ENCODE measurements at regions of chr1 and their contacts with region 1.

Region 1: GRCh38 chr1:27136998-27137542 is 17.9 kb downstream of the SLC9A1 start:
- DNase-seq: peak; percentile 57 to 85 (median 83)
- ATAC-seq: peak; percentile 90
- H3K4me3 ChIP-seq: peak overlapping the region; percentile 64
- H3K4me3 Mint-ChIP-seq: peak overlapping the region; percentile 76 to 97 (median 89)
- H3K27ac ChIP-seq: peak overlapping the region; percentile 87
- H3K27ac Mint-ChIP-seq: peak overlapping the region; percentile 98 to 100 (median 99)
- H3K4me1 ChIP-seq: peaks cover 25 to 34% of the 10 kb centered on the region in 2 donors
- H3K4me1 Mint-ChIP-seq: peaks cover 44 to 64% (median 58%) of the 10 kb centered on the region in 7 donors
- H3K27me3 ChIP-seq: no peaks in the 10 kb centered on the region
- H3K27me3 Mint-ChIP-seq: no peaks in the 10 kb centered on the region

Region 2: DNA sequence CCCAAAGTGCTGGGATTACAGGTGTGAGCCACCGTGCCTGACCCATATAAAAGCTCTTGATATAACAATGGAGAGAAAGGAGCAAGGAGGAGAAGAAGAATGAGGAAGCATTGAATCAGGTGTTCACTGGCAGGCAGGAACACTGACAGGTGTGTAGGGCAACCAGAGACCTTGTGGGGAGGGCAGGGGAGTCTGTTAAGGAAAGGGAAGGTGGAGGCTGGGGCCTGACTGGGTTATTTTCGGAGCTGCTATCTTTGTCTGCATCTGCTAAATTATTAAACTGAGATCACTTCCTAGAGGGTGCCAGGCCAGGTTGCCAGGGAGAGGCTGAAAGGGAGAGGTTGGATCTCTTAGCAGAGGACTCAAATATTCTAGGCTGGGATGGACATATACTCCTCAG is 150.4 kb before region 1 on chr1:
- CTCF ChIA-PET with region 1: interaction called, 10 read pairs
- POLR2A ChIA-PET with region 1: no interaction called
- intact Hi-C with region 1: no loop called
- DNase-seq: no peak
- ATAC-seq: no peak
- H3K4me3 ChIP-seq: no peak overlapping the region
- H3K4me3 Mint-ChIP-seq: no peak overlapping the region
- H3K27ac ChIP-seq: no peak overlapping the region
- H3K27ac Mint-ChIP-seq: no peak overlapping the region
- H3K4me1 ChIP-seq: no peaks in the 10 kb centered on the region
- H3K4me1 Mint-ChIP-seq: peaks cover 0 to 6% (median under 1%) of the 10 kb centered on the region in 7 donors
- H3K27me3 ChIP-seq: no peaks in the 10 kb centered on the region
- H3K27me3 Mint-ChIP-seq: peaks cover 7 to 54% (median 16%) of the 10 kb centered on the region in 5 donors

Region 3: DNA sequence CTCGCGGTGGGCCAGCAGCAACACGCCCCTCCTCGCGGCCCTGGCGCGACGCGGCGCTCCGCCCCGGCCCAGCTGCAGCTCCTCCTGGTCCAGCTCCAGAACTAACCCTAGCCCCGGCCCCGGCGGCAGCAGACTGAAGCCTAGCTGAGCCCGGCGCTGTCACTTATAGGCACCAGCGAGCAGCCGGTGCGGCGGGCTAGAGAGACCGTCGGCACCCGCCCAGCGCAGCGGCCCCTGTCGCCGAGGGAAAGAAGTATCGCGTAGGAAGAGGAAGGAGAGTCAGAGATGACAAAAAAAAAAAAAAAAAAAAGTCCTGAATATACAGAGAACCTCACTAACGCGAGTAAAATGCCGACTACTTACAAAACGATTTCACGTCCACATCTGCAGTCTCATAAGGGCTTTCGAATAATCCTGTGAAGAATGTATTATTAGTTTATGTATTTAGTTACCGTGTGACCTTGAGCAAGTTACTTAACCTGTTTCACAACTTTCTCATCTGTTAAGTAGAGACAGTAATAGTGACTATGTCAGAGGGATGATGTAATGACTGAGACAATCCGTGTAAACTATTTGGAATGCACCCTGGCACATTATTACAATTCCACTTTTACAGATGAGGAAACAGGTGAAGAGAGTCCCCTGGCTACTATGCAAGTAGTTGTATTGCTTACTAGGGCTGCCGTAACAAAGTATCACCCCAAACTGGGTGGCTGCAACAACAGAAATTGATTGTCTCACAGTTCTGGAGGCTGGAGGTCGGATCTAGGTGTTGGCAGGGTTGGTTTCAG is 18.1 kb after region 1 on chr1 and contains the start of gene SLC9A1:
- CTCF ChIA-PET with region 1: interaction called, 18 read pairs
- POLR2A ChIA-PET with region 1: interaction called, 202 read pairs
- intact Hi-C with region 1: loop called (anchors 1 kb)
- DNase-seq: peak; percentile 90 to 96 (median 94)
- ATAC-seq: peak; percentile 98
- H3K4me3 ChIP-seq: peak within 1 kb of the TSS; percentile 40
- H3K4me3 Mint-ChIP-seq: peak within 1 kb of the TSS; percentile 82 to 97 (median 90)
- H3K27ac ChIP-seq: peak within 1 kb of the TSS; percentile 90
- H3K27ac Mint-ChIP-seq: peak within 1 kb of the TSS; percentile 96 to 100 (median 99)
- H3K4me1 ChIP-seq: peaks cover 29 to 36% of the 10 kb centered on the region in 2 donors
- H3K4me1 Mint-ChIP-seq: peaks cover 38 to 52% (median 49%) of the 10 kb centered on the region in 7 donors
- H3K27me3 ChIP-seq: no peaks in the 10 kb centered on the region
- H3K27me3 Mint-ChIP-seq: no peaks in the 10 kb centered on the region
- total RNA-seq, gene SLC9A1: 13.2 to 25.7 (median 21.1) TPM

Region 4: GRCh38 chr1:27161594-27161993 is 24.5 kb after region 1 on chr1:
- CTCF ChIA-PET with region 1: interaction called, 3 read pairs
- POLR2A ChIA-PET with region 1: interaction called, 10 read pairs
- intact Hi-C with region 1: no loop called
- DNase-seq: peak in 7 of 9 donors; percentile 34 to 76 (median 66)
- ATAC-seq: peak; percentile 81
- H3K4me3 ChIP-seq: no peak overlapping the region
- H3K4me3 Mint-ChIP-seq: peak overlapping the region; percentile 20 to 82 (median 48)
- H3K27ac ChIP-seq: peak overlapping the region; percentile 8
- H3K27ac Mint-ChIP-seq: peak overlapping the region; percentile 73 to 95 (median 81)
- H3K4me1 ChIP-seq: peaks cover 0 to 10% of the 10 kb centered on the region in 2 donors
- H3K4me1 Mint-ChIP-seq: peaks cover 9 to 16% (median 12%) of the 10 kb centered on the region in 7 donors
- H3K27me3 ChIP-seq: no peaks in the 10 kb centered on the region
- H3K27me3 Mint-ChIP-seq: no peaks in the 10 kb centered on the region